Endothelial cell of umbilical vein (primary cell): ENCODE measurements at regions of chr3 and their contacts with region 1.

Region 1: DNA sequence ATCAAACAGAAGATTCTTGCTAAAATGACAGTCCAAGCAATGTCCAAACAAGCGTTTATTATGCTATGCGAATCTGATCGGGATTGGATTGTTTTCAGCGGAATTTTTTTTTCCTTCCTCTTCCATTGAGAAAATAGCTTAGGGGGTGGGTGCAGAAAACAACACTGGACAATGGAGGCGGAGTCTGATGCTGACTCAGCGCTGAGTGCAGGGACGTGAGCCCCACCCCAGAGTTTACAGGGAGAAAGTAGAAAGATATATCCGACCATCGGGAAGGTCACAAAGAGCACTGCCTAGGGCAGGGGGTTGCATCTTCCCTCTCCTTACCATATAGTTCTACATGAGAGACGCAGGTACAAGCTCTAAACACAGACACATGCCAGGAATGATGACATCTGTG is 117.0 kb downstream of the FOXP1 start:
- DNase-seq: peak; percentile 89
- H3K4me3 ChIP-seq: peak overlapping the region in 1 of 3 experiments; percentile 9
- H3K27ac ChIP-seq: no peak overlapping the region
- H3K4me1 ChIP-seq: peaks cover 16% of the 10 kb centered on the region
- H3K27me3 ChIP-seq: no peaks in the 10 kb centered on the region
- CTCF ChIP-seq: no peak
- POLR2A ChIP-seq: no peak

Region 2: GRCh38 chr3:70982700-70983140 is 483.8 kb before region 1 on chr3:
- CTCF ChIA-PET with region 1: no interaction called
- POLR2A ChIA-PET with region 1: no interaction called
- dilution Hi-C with region 1: no loop called
- intact Hi-C with region 1: no loop called
- DNase-seq: peak; percentile 97
- H3K4me3 ChIP-seq: no peak overlapping the region
- H3K27ac ChIP-seq: peak overlapping the region; percentile 92
- H3K4me1 ChIP-seq: peaks cover 46% of the 10 kb centered on the region
- H3K27me3 ChIP-seq: no peaks in the 10 kb centered on the region
- CTCF ChIP-seq: no peak
- POLR2A ChIP-seq: peak; percentile 56

Region 3: GRCh38 chr3:71504250-71505036 is 38.0 kb after region 1 on chr3:
- CTCF ChIA-PET with region 1: no interaction called
- POLR2A ChIA-PET with region 1: no interaction called
- dilution Hi-C with region 1: no loop called
- intact Hi-C with region 1: loop called (anchors 1 kb)
- DNase-seq: peak; percentile 65
- H3K4me3 ChIP-seq: no peak overlapping the region
- H3K27ac ChIP-seq: peak overlapping the region; percentile 69
- H3K4me1 ChIP-seq: peaks cover 15% of the 10 kb centered on the region
- H3K27me3 ChIP-seq: no peaks in the 10 kb centered on the region
- CTCF ChIP-seq: no peak
- POLR2A ChIP-seq: no peak